Thyroid gland (tissue), 4 donors: ENCODE measurements at regions of chr11 and their contacts with region 1.

Region 1: GRCh38 chr11:14290422-14290821 is 68.6 kb downstream of the RRAS2 start:
- DNase-seq: no peak
- H3K4me3 ChIP-seq: no peak overlapping the region
- H3K27ac ChIP-seq: no peak overlapping the region
- H3K4me1 ChIP-seq: no peaks in the 10 kb centered on the region
- H3K27me3 ChIP-seq: no peaks in the 10 kb centered on the region
- CTCF ChIP-seq: no peak
- POLR2A ChIP-seq: no peak

Region 2: GRCh38 chr11:13238879-13239514 is 1051.4 kb before region 1 on chr11:
- intact Hi-C with region 1: no loop called
- DNase-seq: peak; percentile 30 to 41
- H3K4me3 ChIP-seq: no peak overlapping the region
- H3K27ac ChIP-seq: no peak overlapping the region
- H3K4me1 ChIP-seq: no peaks in the 10 kb centered on the region
- H3K27me3 ChIP-seq: no peaks in the 10 kb centered on the region
- CTCF ChIP-seq: peak; percentile 54 to 87 (median 67)
- POLR2A ChIP-seq: no peak

Region 3: DNA sequence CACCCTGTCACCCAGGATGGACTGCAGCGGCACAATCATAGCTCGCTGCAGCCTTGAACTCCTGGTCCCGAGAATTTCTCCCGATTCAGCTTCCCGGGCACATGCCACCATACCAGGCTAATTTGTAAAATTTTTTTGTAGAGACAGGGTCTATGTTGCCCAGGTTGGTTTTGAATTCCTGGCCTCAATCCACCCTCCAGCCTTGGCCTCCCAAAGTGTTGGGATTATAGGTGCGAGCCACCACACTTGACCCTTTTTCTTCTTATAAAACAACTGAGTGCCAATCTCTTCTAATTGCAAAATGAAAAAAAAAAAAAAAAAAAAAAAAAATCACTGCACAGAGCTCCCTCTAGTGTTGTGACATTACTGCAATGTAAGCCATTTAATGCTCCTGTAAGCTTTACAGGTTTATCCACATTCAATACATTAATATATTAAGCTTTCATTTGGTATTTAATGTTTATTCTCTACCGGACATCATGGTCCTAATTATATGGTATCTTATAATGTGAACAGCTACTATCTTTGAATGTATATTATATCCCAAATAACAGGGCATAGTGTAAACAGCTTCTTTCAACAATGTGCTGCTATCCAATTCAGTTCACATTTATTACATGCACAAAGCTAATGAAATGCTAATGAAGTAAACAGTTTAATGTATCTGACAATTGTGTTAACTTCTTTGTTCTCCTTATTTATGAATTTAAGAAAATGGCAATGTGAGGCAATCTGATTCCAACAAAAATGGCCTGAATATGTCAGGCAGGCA is 164.6 kb after region 1 on chr11:
- intact Hi-C with region 1: loop called (anchors 10 kb)
- DNase-seq: no peak
- H3K4me3 ChIP-seq: no peak overlapping the region
- H3K27ac ChIP-seq: no peak overlapping the region
- H3K4me1 ChIP-seq: no peaks in the 10 kb centered on the region
- H3K27me3 ChIP-seq: no peaks in the 10 kb centered on the region
- CTCF ChIP-seq: peak in 4 of 6 experiments; percentile 15 to 69 (median 50)
- POLR2A ChIP-seq: no peak